Activated T-helper 1 cell treated with anti-CD3 and anti-CD28 coated beads, Interleukin-12 subunit alpha, Interleukin-12 subunit beta, Interleukin-2, Interleukin-4 antibody, amounts not matched to agents 30 ng/mL and 10 ng/mL and 1 ng/mL, durations not matched to agents 14 hours and 24 hours and 36 hours (primary cell): ENCODE measurements at regions of chr2 and their contacts with region 1.

Region 1: DNA sequence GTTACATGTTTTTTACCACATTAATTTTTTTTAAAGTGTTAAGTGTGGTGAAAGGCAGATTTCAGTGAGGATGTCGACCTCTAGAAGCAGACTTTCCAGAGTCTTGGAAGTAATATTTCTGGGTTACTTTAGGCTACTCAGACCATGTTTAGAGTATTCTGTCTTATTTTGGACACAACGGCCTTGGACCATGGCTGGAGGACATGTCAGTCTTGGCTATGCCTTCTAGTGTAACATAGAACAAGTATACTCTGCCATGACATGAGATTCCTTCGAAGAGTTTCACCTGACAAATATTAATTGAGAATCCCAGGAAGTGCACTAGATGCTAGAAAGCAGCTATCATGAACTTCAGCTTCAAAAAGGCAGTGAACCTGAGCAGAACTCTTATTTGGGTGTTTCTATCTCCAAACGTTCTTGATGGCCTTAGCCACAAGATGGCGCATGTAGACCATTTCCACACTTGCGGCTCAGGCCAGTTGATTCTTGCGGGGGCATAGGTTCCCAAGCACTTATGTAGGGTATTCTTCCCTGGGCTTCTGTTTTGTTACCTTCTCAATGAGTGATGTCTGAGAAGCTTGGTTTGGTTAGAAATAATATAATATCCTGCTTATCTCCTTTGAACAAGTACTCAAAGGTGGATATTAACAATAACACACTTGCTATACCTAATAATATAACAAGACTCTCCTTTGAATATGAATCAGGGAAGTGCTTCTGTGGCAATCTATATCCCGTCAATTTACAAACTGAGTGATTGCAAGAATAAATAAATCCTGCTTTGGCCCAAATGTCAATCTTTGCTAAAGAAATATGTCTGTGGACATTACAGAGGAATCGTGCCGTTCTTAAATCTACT is 62.0 kb downstream of the CACNB4 start:
- DNase-seq: peak; percentile 9
- H3K4me3 Mint-ChIP-seq: no peak overlapping the region
- H3K27ac Mint-ChIP-seq: no peak overlapping the region
- H3K4me1 Mint-ChIP-seq: no peaks in the 10 kb centered on the region
- H3K27me3 Mint-ChIP-seq: peaks cover 5% of the 10 kb centered on the region

Region 2: DNA sequence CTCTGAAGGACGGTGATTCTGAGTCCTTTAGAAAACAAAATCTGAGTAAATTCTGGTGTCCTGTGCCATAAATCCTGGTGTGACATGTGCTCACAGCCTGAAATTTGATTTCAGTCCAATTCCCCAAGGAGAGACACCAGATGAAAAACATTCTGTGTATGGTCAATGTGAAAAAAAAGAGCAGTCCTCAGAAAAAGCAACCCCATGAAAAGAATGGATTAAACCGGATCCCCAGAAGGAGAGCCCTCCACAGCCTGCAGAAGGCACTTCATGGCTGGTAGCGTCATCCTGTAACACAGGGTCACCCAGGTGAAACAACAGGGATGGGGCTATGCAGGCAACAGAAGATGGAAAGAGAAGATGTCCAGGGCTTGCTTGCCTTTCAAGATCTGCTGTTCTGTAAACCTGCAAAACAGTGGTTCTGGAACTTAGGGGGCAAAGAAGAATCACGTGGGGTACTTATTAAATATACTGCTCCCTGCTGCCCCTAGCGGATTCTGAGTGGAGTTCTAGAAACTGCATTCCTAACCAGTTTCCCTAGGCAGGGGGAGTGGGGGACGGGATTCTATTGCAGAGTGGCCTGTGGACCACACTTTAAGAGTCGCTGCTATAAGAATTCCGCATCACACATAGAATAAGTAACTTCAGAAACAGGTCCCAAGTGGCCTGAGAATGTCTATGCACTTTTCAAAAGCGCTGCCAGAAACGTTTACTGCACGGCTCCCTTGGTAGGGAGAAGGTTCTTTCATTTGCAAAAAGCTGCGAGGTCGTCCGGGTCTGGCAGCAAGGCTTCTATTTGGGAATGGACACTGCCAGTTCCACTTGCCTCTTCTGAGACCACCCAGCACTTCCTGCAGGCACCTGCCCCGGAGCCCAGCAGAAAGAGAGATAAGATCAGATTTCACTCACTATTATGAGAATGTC is 89.7 kb before region 1 on chr2:
- intact Hi-C with region 1: no loop called
- DNase-seq: no peak
- H3K4me3 Mint-ChIP-seq: no peak overlapping the region
- H3K27ac Mint-ChIP-seq: no peak overlapping the region
- H3K4me1 Mint-ChIP-seq: no peaks in the 10 kb centered on the region
- H3K27me3 Mint-ChIP-seq: peaks cover 4% of the 10 kb centered on the region

Region 3: DNA sequence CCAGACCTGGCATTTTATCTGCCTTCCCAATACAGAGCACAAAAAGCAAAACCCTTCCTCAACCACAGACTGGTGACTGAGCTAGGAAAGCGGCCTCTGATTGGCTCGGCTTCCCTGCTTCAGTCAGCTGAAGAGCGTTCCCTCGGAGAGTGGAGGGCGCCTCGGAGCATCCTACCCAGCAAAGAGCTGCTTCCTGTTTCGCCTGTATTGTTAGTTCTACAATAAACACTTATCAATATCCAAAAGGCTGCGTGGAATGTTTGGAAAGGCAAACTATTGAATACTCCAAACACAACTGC is 63.0 kb before region 1 on chr2:
- intact Hi-C with region 1: no loop called
- DNase-seq: no peak
- H3K4me3 Mint-ChIP-seq: no peak overlapping the region
- H3K27ac Mint-ChIP-seq: no peak overlapping the region
- H3K4me1 Mint-ChIP-seq: peaks cover 23% of the 10 kb centered on the region
- H3K27me3 Mint-ChIP-seq: peaks cover 6% of the 10 kb centered on the region

Region 4: DNA sequence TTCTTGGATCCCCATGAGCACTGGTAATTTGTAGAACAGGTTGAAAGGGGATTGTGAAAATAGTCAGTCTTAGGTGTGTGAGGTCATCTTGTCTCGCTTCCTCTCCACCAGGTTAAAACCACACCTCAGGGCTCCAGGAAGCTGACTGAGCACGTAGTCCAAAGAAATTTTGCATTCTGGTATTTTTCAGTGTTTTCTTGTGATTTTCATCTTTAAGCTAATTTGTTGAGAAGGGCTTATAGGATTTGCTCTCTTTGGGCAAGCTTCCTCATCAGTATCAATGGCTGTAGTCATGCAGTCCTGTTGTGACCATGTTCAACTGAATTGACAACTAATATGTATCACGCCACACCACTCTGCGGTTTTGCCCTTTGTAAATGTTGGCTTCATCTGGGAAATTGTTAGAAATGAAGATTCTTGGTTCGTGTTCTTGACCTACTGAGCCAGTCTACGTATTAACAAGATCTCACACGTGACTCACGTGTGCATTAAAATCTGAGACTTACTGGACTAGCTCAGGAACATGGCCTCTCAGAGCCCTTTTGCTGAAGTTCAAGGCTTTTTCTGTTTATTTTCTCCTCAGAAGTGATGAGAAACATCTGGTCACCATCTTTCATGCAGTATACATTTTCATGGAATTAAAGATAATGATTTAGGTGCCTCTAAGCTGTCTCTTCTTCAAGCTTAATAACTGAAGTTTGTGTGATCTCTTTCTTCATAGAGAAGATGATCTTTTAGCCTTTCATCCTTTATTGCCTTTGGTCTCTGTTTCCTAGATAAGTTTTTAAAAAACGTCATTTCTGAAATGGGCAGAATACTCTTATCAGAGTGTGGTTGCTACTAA is 330.9 kb after region 1 on chr2:
- intact Hi-C with region 1: no loop called
- DNase-seq: no peak
- H3K4me3 Mint-ChIP-seq: no peak overlapping the region
- H3K27ac Mint-ChIP-seq: no peak overlapping the region
- H3K4me1 Mint-ChIP-seq: peaks cover 8% of the 10 kb centered on the region
- H3K27me3 Mint-ChIP-seq: no peaks in the 10 kb centered on the region

Region 5: GRCh38 chr2:152627351-152627957 is 590.6 kb after region 1 on chr2:
- intact Hi-C with region 1: loop called (anchors 2 kb)
- DNase-seq: no peak
- H3K4me3 Mint-ChIP-seq: no peak overlapping the region
- H3K27ac Mint-ChIP-seq: no peak overlapping the region
- H3K4me1 Mint-ChIP-seq: peaks cover 16% of the 10 kb centered on the region
- H3K27me3 Mint-ChIP-seq: peaks cover 9% of the 10 kb centered on the region

Region 6: DNA sequence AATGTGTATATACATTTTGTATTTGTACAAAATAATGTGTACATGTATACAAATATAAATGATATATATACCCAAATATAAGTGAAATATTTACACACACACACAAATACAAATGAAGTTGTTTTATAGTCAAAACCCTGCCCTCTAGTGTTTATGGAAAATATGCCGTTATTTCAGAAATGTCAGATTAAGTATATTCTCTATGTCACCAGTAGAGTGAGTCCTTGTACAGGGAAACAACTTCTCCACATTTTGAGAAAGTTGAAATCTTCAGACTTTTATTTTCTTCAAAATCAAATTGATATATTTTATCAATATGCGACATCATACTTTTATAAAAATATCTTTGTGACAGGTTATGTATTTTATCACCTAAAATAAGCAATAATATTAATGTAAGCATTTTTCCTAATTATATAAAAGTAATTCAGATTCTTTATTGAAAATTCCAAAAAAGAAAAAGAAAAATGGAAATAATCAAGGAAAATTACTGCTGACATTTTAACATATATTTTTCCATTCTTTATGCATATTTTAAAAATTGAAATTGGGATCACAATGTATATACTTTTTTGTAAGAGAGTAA is 704.0 kb after region 1 on chr2:
- intact Hi-C with region 1: loop called (anchors 2 kb)
- DNase-seq: no peak
- H3K4me3 Mint-ChIP-seq: no peak overlapping the region
- H3K27ac Mint-ChIP-seq: no peak overlapping the region
- H3K4me1 Mint-ChIP-seq: no peaks in the 10 kb centered on the region
- H3K27me3 Mint-ChIP-seq: peaks cover 1% of the 10 kb centered on the region